ENCODE measurements at regions of chr3 and their contacts with region 1.

Region 1: GRCh38 chr3:196995646-196996371 is 27.2 kb upstream of the PIGZ start:
- DNase-seq: peak in 2 of 5 donors; percentile 16
- ATAC-seq: no peak
- H3K4me3 ChIP-seq: no peak overlapping the region
- H3K27ac ChIP-seq: no peak overlapping the region
- H3K4me1 ChIP-seq: no peaks in the 10 kb centered on the region
- H3K27me3 ChIP-seq: no peaks in the 10 kb centered on the region
- CTCF ChIP-seq: no peak
- POLR2A ChIP-seq: no peak

Region 2: GRCh38 chr3:197104736-197105135 is 108.9 kb after region 1 on chr3:
- intact Hi-C with region 1: no loop called
- DNase-seq: no peak
- ATAC-seq: no peak
- H3K4me3 ChIP-seq: no peak overlapping the region
- H3K27ac ChIP-seq: no peak overlapping the region
- H3K4me1 ChIP-seq: no peaks in the 10 kb centered on the region
- H3K27me3 ChIP-seq: no peaks in the 10 kb centered on the region
- CTCF ChIP-seq: no peak
- POLR2A ChIP-seq: no peak

Region 3: GRCh38 chr3:197186887-197187588 is 191.2 kb after region 1 on chr3:
- intact Hi-C with region 1: loop called in 7 of 10 experiments (anchors 5 to 10 kb)
- DNase-seq: peak in 1 of 5 donors; percentile 13
- ATAC-seq: peak; percentile 58 to 75 (median 64)
- H3K4me3 ChIP-seq: no peak overlapping the region
- H3K27ac ChIP-seq: no peak overlapping the region
- H3K4me1 ChIP-seq: peaks cover 0 to 13% (median 3%) of the 10 kb centered on the region in 12 donors
- H3K27me3 ChIP-seq: no peaks in the 10 kb centered on the region
- CTCF ChIP-seq: peak; percentile 71 to 91 (median 82)
- POLR2A ChIP-seq: no peak

Region 4: GRCh38 chr3:197501879-197502620 is 506.2 kb after region 1 on chr3:
- intact Hi-C with region 1: loop called in 2 of 10 experiments (anchors 10 kb)
- DNase-seq: peak in 1 of 5 donors; percentile 44
- ATAC-seq: peak in 3 of 4 donors; percentile 67 to 78 (median 70)
- H3K4me3 ChIP-seq: no peak overlapping the region
- H3K27ac ChIP-seq: no peak overlapping the region
- H3K4me1 ChIP-seq: no peaks in the 10 kb centered on the region
- H3K27me3 ChIP-seq: no peaks in the 10 kb centered on the region
- CTCF ChIP-seq: peak in 11 of 12 donors; percentile 16 to 50 (median 36)
- POLR2A ChIP-seq: no peak